Caco-2 (cell line): ENCODE measurements at regions of chr3 and their contacts with region 1.

Region 1: GRCh38 chr3:111539351-111540331 is 2.4 kb upstream of the CD96 start:
- DNase-seq: peak; percentile 72 to 73
- H3K4me3 ChIP-seq: no peak overlapping the region
- H3K4me3 Mint-ChIP-seq: no peak overlapping the region
- H3K27ac Mint-ChIP-seq: no peak overlapping the region
- H3K4me1 ChIP-seq: peaks cover 14% of the 10 kb centered on the region; the same call in 1 of the 2 replicates
- H3K4me1 Mint-ChIP-seq: peaks cover 11% of the 10 kb centered on the region
- H3K27me3 ChIP-seq: no peaks in the 10 kb centered on the region
- H3K27me3 Mint-ChIP-seq: no peaks in the 10 kb centered on the region
- CTCF ChIP-seq: peak; percentile 80 to 85

Region 2: DNA sequence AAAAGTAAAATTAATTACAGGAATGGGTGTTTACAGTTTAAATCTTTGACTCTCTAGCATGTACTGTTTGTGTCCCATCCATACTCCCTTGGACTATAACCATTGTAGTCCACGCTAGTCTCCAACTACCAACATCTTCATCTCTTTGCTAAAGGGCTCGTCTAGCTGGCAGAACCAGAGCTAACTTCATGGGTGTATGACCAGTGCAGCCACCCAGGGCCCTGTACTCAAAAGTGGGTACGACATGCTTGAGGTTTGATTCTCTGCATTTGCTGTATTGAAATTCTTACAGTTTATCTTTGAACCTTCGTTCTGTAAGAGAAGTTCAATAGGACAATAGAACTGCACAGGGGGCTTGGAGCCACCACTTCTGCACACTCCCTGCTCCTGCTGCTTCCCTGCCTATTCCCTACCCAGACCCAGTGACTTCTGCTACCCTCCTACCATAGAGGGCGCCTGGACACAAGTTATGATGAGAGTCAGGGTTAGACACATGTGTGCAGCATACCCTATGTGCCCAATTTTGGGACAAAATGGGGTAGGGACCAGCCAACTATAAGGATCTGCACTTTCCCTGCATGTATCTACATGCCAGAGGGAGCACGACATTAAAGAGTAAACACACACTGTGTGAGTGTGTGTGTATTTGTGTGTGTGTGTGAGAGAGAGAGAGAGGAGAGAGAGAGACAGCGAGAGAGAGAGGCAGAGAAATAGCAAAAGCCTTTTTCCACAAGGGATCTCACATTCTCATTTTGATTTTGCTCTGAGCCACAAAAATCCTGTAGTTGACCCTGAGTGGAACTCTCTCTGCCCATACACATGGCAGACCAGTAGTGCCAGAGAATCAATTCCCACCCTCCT is 527.0 kb before region 1 on chr3:
- CTCF ChIA-PET with region 1: no interaction called
- POLR2A ChIA-PET with region 1: no interaction called
- intact Hi-C with region 1: loop called (anchors 1 kb)
- DNase-seq: peak; percentile 50 to 56
- H3K4me3 ChIP-seq: no peak overlapping the region
- H3K4me3 Mint-ChIP-seq: no peak overlapping the region
- H3K27ac Mint-ChIP-seq: no peak overlapping the region
- H3K4me1 ChIP-seq: no peaks in the 10 kb centered on the region
- H3K4me1 Mint-ChIP-seq: peaks cover 6% of the 10 kb centered on the region
- H3K27me3 ChIP-seq: no peaks in the 10 kb centered on the region
- H3K27me3 Mint-ChIP-seq: no peaks in the 10 kb centered on the region
- CTCF ChIP-seq: peak in 1 of 2 experiments; percentile 31

Region 3: DNA sequence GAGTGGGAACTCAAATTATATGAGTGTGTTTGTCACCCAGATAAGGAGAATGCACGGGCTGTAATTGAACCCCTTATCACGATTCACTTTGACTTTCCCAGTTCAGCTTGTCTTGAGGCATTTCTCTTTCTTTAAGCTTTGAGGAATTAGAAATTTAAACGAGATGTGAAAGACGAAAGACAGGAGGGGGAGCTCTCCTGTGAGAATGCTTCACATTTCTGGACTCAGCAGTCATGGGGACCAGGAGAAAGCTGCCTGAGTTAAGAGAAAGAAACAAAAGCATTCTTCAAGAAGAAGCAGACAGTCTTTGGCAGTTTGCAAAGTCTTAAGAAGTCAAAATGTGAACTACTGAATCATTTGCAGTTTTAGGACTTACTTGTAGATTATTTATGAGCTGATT is 262.4 kb before region 1 on chr3:
- CTCF ChIA-PET with region 1: no interaction called
- POLR2A ChIA-PET with region 1: no interaction called
- intact Hi-C with region 1: loop called (anchors 1 kb)
- DNase-seq: peak in 1 of 2 experiments; percentile 25
- H3K4me3 ChIP-seq: no peak overlapping the region
- H3K4me3 Mint-ChIP-seq: no peak overlapping the region
- H3K27ac Mint-ChIP-seq: no peak overlapping the region
- H3K4me1 ChIP-seq: no peaks in the 10 kb centered on the region
- H3K4me1 Mint-ChIP-seq: no peaks in the 10 kb centered on the region
- H3K27me3 ChIP-seq: no peaks in the 10 kb centered on the region
- H3K27me3 Mint-ChIP-seq: no peaks in the 10 kb centered on the region
- CTCF ChIP-seq: peak; percentile 18 to 35

Region 4: GRCh38 chr3:111299068-111299672 is 240.5 kb before region 1 on chr3:
- CTCF ChIA-PET with region 1: no interaction called
- POLR2A ChIA-PET with region 1: no interaction called
- intact Hi-C with region 1: loop called (anchors 1 kb)
- DNase-seq: no peak
- H3K4me3 ChIP-seq: no peak overlapping the region
- H3K4me3 Mint-ChIP-seq: no peak overlapping the region
- H3K27ac Mint-ChIP-seq: no peak overlapping the region
- H3K4me1 ChIP-seq: peaks cover 10% of the 10 kb centered on the region
- H3K4me1 Mint-ChIP-seq: peaks cover 8% of the 10 kb centered on the region
- H3K27me3 ChIP-seq: no peaks in the 10 kb centered on the region
- H3K27me3 Mint-ChIP-seq: peaks cover 4% of the 10 kb centered on the region
- CTCF ChIP-seq: peak in 1 of 2 experiments; percentile 24

Region 5: DNA sequence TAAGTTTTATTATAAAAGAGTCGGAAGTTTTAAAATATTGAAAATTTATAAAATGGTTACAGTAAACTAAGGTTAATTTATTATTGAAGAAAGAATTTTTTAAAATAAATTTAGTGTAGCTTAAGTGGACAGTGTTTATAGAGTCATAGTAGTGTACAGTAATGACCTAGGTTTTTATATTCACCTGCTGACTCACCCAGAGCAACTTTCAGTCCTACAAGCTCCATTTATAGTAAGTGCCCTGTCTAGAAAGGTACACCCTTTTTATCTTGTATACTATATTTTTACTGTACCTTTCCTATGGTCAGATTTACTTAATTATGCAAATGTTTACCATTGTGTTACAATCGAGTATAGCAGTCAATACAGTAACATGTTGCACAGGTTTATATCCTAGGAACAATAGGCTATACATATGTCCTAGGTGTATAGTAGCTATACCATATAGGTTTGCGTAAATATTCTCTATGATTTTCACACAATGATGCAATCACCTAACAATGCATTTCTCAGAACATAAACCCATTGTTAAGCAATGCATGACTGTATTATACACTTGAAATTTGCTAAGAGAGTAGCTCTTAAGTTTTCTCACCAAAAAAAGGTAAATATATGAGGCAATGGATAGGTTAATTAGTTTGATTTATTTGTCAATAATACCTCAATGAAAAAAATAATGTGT is 104.6 kb before region 1 on chr3:
- CTCF ChIA-PET with region 1: no interaction called
- POLR2A ChIA-PET with region 1: no interaction called
- intact Hi-C with region 1: loop called (anchors 10 kb)
- DNase-seq: no peak
- H3K4me3 ChIP-seq: no peak overlapping the region
- H3K4me3 Mint-ChIP-seq: no peak overlapping the region
- H3K27ac Mint-ChIP-seq: no peak overlapping the region
- H3K4me1 ChIP-seq: peaks cover 9% of the 10 kb centered on the region; the same call in 1 of the 2 replicates
- H3K4me1 Mint-ChIP-seq: peaks cover 10% of the 10 kb centered on the region
- H3K27me3 ChIP-seq: no peaks in the 10 kb centered on the region
- H3K27me3 Mint-ChIP-seq: no peaks in the 10 kb centered on the region
- CTCF ChIP-seq: no peak